Vagina (tissue), 2 donors: ENCODE measurements at regions of chr4 and their contacts with region 1.

Region 1: GRCh38 chr4:30094887-30095286 is 625.3 kb upstream of the PCDH7 start:
- DNase-seq: no peak
- H3K4me3 ChIP-seq: no peak overlapping the region
- H3K27ac ChIP-seq: no peak overlapping the region
- H3K4me1 ChIP-seq: no peaks in the 10 kb centered on the region
- H3K27me3 ChIP-seq: no peaks in the 10 kb centered on the region
- CTCF ChIP-seq: no peak
- POLR2A ChIP-seq: no peak

Region 2: DNA sequence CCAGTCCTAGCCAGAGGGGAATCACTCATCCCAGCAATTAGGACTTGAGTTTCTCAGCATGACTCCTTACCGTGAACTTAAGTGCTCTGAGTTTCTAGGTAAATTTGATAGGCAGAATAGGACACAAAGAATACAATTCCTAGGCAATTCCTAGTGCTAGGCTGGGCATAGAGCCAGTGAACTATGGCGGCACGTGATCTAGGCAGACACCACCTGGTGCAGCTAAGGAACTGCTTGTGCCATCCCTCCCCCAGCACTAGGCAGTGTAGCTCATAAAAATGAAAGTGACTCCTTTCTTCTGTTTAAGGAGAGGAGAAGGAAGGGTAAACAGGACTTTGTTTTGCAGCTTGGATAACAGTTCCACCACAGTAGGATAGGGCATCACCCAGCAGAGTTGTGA is 111.0 kb before region 1 on chr4:
- intact Hi-C with region 1: loop called (anchors 5 kb)
- DNase-seq: no peak
- H3K4me3 ChIP-seq: no peak overlapping the region
- H3K27ac ChIP-seq: no peak overlapping the region
- H3K4me1 ChIP-seq: no peaks in the 10 kb centered on the region
- H3K27me3 ChIP-seq: no peaks in the 10 kb centered on the region
- CTCF ChIP-seq: no peak
- POLR2A ChIP-seq: no peak

Region 3: GRCh38 chr4:30056016-30056766 is 38.7 kb before region 1 on chr4:
- intact Hi-C with region 1: no loop called
- DNase-seq: no peak
- H3K4me3 ChIP-seq: no peak overlapping the region
- H3K27ac ChIP-seq: no peak overlapping the region
- H3K4me1 ChIP-seq: no peaks in the 10 kb centered on the region
- H3K27me3 ChIP-seq: no peaks in the 10 kb centered on the region
- CTCF ChIP-seq: no peak
- POLR2A ChIP-seq: no peak